Left ventricle myocardium superior (tissue), 1 donor: ENCODE measurements at regions of chr4 and their contacts with region 1.

Region 1: GRCh38 chr4:18689308-18690115 is 668.0 kb upstream of the LCORL start:
- DNase-seq: no peak
- ATAC-seq: peak; percentile 52

Region 2: DNA sequence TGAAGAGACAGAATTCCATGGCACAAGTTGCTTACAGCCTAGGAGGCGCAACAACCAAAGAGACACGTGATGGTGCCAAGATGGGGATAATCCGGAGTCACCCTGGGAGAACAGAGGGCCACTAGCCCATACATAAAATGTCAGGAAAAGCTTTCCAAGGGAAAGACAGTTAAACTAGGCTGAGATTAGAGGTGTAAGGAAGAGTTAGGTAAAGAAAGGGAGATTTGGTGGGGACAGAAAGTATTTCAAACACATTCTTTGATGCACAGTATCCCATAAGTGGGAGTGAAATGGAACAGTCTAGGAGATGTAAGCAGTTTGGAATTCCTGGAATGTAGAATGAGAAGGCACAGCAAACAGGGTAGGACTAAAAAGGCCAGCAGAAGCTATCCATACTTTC is 193.0 kb after region 1 on chr4:
- intact Hi-C with region 1: no loop called
- DNase-seq: no peak
- ATAC-seq: peak; percentile 44

Region 3: DNA sequence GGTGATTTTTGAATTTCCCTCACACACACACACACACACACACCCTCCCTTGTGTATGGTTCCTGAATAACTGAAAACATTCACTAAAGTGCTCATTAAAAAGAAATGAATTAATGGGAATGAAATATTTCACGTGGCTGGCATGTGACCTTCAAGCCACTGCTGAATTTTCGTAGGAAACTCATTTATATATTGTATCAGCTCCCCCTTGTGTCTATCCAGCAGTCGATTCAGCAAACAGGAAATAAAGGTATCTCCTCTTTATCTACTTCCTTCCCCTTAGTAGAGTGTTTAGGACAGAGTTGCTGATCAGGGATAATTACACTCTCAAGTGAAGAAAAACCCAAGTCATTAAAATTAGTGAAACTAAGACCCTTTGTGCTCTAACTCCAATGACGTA is 244.7 kb after region 1 on chr4:
- intact Hi-C with region 1: loop called (anchors 5 kb)
- DNase-seq: no peak
- ATAC-seq: peak; percentile 63

Region 4: GRCh38 chr4:20684852-20685763 is 1995.6 kb after region 1 on chr4:
- intact Hi-C with region 1: loop called (anchors 5 kb)
- DNase-seq: no peak
- ATAC-seq: no peak